Mammary epithelial cell (primary cell): ENCODE measurements at regions of chr22 and their contacts with region 1.

Region 1: DNA sequence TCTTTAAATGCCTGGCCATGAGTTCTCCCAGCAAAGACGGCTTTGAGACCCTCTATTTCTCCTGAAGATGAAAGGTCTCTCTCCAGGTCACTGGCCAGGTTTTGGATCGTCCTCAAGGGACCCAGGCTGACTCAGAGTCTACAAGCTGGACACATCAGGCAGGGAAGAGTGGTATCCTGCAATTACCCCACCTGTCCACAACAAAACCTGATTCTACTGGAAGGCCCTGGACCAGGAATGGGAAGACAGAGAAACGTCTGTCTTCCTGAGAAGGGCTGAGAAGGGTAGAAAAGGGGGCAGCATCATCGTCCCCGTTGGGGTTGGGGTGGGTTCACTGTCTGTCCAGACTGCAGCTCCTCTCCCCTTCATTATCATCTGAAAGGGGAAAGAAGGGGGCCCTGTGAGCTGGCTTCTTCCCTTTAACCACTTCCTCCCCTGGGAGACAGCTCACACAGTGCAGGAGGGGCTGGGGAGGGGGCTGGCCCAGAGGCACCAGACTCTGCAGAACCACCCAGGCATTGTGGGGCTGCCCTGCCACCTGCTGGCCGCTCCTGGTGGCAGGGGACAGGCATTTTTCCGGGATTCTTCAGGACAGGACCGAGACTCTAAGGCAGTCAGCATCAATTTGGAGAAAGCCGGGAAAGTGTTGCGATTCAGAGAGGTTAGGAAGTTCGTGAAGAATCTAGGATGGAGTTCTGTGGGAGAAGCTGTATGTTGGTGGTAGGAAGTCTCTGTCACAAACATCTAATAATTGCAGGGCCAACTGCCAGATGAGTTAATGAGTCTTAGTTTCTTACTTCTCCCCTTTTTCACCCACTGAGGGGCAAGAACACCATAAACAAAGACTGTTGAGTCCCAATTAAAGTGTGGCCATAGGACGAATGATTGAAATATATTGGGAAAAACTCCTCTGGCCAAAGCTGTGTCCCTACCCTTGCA is 57.6 kb downstream of the SYN3 start:
- DNase-seq: peak; percentile 44
- H3K4me3 ChIP-seq: no peak overlapping the region
- H3K27ac ChIP-seq: peak overlapping the region; percentile 14
- H3K4me1 ChIP-seq: peaks cover 53% of the 10 kb centered on the region
- H3K27me3 ChIP-seq: no peaks in the 10 kb centered on the region
- CTCF ChIP-seq: peak; percentile 88 to 97

Region 2: GRCh38 chr22:32660292-32660691 is 340.3 kb before region 1 on chr22:
- CTCF ChIA-PET with region 1: interaction called, 4 read pairs
- dilution Hi-C with region 1: no loop called
- in situ Hi-C with region 1: loop called (anchors 25 kb)
- intact Hi-C with region 1: loop called (anchors 1 kb)
- DNase-seq: peak; percentile 62
- H3K4me3 ChIP-seq: no peak overlapping the region
- H3K27ac ChIP-seq: no peak overlapping the region
- H3K4me1 ChIP-seq: peaks cover 24% of the 10 kb centered on the region
- H3K27me3 ChIP-seq: no peaks in the 10 kb centered on the region
- CTCF ChIP-seq: peak; percentile 72 to 86

Region 3: GRCh38 chr22:32754413-32755041 is 246.1 kb before region 1 on chr22:
- CTCF ChIA-PET with region 1: no interaction called
- dilution Hi-C with region 1: no loop called
- in situ Hi-C with region 1: no loop called
- intact Hi-C with region 1: loop called (anchors 1 kb)
- DNase-seq: peak; percentile 42
- H3K4me3 ChIP-seq: no peak overlapping the region
- H3K27ac ChIP-seq: no peak overlapping the region
- H3K4me1 ChIP-seq: peaks cover 6% of the 10 kb centered on the region
- H3K27me3 ChIP-seq: no peaks in the 10 kb centered on the region
- CTCF ChIP-seq: no peak

Region 4: GRCh38 chr22:32836280-32837123 is 164.1 kb before region 1 on chr22:
- CTCF ChIA-PET with region 1: no interaction called
- dilution Hi-C with region 1: no loop called
- in situ Hi-C with region 1: no loop called
- intact Hi-C with region 1: loop called (anchors 1 kb)
- DNase-seq: no peak
- H3K4me3 ChIP-seq: no peak overlapping the region
- H3K27ac ChIP-seq: no peak overlapping the region
- H3K4me1 ChIP-seq: no peaks in the 10 kb centered on the region
- H3K27me3 ChIP-seq: no peaks in the 10 kb centered on the region
- CTCF ChIP-seq: peak; percentile 42 to 48

Region 5: DNA sequence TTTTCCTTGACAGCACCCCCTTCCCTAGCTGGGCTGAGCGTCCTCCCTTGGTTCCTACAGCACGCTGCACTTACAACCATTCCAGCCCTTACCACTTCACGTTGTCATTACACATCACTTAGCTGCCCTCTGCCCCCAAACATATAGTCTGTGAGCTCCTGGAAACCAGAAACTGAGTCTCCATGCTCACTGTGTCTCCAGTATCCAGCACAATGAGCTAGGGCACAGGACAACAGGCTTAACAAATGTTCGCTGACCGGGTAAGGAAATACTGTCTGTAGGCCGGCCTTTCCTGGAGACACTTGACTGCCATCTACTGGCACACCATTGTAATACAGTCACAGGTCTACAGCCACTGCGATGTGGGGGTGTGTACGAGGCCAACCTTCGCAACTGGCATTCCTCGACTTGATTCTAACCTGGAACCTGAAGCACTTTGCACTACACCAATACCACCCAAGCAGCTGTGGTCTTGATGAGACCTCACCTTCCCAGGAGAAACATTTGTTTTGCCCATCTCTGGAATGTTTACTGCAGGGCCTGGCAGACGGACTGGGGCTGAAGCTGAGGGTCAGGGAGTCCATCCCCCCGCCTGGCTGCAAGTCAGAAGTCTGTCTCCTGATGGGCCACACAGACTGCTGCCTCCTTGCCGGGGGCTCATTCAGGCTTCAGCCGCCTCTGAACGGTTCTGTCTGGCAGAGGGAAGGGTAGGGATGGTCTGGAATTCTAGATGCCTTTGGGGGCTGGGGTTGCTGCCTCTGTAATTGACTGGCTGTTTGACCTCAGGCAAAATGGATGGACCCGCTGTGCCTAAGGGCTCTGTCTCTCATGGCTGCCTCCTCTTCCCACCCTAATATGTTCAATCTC is 14.5 kb before region 1 on chr22:
- CTCF ChIA-PET with region 1: interaction called, 4 read pairs
- dilution Hi-C with region 1: no loop called
- in situ Hi-C with region 1: no loop called
- intact Hi-C with region 1: loop called (anchors 1 kb)
- DNase-seq: peak; percentile 75
- H3K4me3 ChIP-seq: no peak overlapping the region
- H3K27ac ChIP-seq: peak overlapping the region; percentile 80
- H3K4me1 ChIP-seq: peaks cover 34% of the 10 kb centered on the region
- H3K27me3 ChIP-seq: no peaks in the 10 kb centered on the region
- CTCF ChIP-seq: peak; percentile 86 to 92